A549 (cell line): ENCODE measurements at regions of chr5 and their contacts with region 1.

Region 1: DNA sequence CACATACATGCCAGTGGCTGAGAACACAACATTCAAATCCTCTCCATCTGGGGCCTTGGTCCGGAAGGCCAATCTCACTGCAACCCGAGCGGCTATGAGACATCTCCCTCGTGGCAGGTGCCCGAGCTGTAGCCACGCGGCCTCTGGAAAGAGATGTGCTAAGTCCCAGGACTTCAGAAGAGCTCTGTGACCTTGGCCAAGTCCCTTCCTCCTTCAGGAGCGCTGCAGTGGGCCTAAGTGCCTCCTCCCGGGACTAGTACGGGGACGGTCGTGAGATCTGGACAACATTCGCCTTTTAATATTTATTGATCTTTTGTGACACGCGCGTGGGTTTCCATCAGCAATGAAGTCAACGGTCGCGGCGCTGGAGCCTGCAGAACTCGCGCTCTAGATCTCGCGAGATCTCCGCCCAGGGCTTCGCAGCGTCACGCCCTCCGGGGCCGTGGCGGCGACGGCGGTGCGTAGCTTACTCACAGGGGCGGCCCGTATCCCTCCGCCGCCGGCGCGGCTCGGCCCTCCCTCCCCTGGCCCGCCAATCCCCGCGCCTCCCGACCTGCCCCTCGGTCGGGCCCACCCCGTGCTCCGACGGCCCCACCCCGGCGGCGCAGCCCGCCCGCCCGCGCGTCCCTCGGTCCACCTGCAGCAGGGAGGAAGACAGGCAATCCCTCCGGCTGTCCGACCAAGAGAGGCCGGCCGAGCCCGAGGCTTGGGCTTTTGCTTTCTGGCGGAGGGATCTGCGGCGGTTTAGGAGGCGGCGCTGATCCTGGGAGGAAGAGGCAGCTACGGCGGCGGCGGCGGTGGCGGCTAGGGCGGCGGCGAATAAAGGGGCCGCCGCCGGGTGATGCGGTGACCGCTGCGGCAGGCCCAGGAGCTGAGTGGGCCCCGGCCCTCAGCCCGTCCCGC is at the start of gene UBE2D2:
- DNase-seq: peak; percentile 95 to 99
- ATAC-seq: peak; percentile 95
- H3K4me3 ChIP-seq: peak within 1 kb of the TSS; percentile 84
- H3K27ac ChIP-seq: peak within 1 kb of the TSS; percentile 87 to 90
- H3K4me1 ChIP-seq: peaks cover 29% of the 10 kb centered on the region; the same call in 2 of the 3 replicates
- CTCF ChIP-seq: no peak
- EP300 ChIP-seq: no peak
- POLR2A ChIP-seq: peak; percentile 57
- RAD21 ChIP-seq: no peak
- polyA plus RNA-seq, gene UBE2D2: 74.8 and 92.9 TPM in 2 replicates

Region 2: GRCh38 chr5:139104577-139105276 is 456.3 kb before region 1 on chr5:
- CTCF ChIA-PET with region 1: no interaction called
- POLR2A ChIA-PET with region 1: no interaction called
- DNase-seq: no peak
- ATAC-seq: no peak
- H3K4me3 ChIP-seq: no peak overlapping the region
- H3K27ac ChIP-seq: no peak overlapping the region
- H3K4me1 ChIP-seq: peaks cover 7% of the 10 kb centered on the region
- CTCF ChIP-seq: no peak
- EP300 ChIP-seq: no peak
- POLR2A ChIP-seq: no peak
- RAD21 ChIP-seq: no peak

Region 3: GRCh38 chr5:139481580-139482049 is 79.4 kb before region 1 on chr5:
- CTCF ChIA-PET with region 1: no interaction called
- POLR2A ChIA-PET with region 1: interaction called, 18 read pairs
- DNase-seq: no peak
- ATAC-seq: peak; percentile 39 to 49; a peak in 3 of 6 replicates
- H3K4me3 ChIP-seq: no peak overlapping the region
- H3K27ac ChIP-seq: peak overlapping the region in 1 of 2 experiments; percentile 33; a peak in 1 of 6 replicates
- H3K4me1 ChIP-seq: peaks cover 7% of the 10 kb centered on the region; the same call in 1 of the 3 replicates
- CTCF ChIP-seq: no peak
- EP300 ChIP-seq: no peak
- POLR2A ChIP-seq: no peak
- RAD21 ChIP-seq: no peak

Region 4: DNA sequence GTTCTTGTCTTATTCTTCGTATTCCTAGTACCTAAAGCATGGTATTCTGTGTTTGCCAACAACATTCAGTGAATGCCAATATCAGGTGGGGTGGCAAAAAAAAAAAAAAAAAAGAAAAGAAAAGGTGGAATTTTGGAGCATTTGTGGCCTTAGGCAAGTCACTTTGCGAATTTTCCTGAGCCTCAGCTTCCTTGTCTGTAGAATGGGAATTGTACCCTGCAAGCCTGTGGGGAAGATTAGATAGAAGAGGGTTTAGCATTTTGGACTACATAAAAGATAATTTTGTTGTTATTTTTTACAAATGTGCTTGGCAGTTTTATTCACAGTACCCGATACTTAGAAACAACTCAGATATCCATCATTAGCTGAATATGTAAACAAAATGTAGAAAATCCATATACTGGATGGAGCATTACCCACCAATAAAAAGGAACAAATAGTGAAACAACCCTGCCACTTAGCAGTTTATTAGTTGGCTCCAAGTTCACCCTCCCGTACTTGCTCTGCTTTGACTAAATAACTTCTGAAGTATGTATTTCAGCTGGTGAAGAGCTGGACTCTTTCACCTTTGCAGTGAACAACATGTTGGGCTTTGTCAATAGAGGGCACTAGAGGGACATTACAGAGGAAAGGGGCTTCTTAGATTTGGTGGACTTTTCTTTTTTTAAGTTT is 13.8 kb after region 1 on chr5:
- CTCF ChIA-PET with region 1: interaction called, 13 read pairs
- POLR2A ChIA-PET with region 1: interaction called, 18 read pairs
- DNase-seq: peak; percentile 44 to 46
- ATAC-seq: peak; percentile 80 to 89; a peak in 5 of 6 replicates
- H3K4me3 ChIP-seq: no peak overlapping the region
- H3K27ac ChIP-seq: no peak overlapping the region
- H3K4me1 ChIP-seq: peaks cover 29% of the 10 kb centered on the region; the same call in 2 of the 3 replicates
- CTCF ChIP-seq: peak; percentile 74
- EP300 ChIP-seq: no peak
- POLR2A ChIP-seq: no peak
- RAD21 ChIP-seq: peak; percentile 64 to 71